CD8-positive, alpha-beta memory T cell (primary cell): ENCODE measurements at regions of chr19 and their contacts with region 1.

Region 1: DNA sequence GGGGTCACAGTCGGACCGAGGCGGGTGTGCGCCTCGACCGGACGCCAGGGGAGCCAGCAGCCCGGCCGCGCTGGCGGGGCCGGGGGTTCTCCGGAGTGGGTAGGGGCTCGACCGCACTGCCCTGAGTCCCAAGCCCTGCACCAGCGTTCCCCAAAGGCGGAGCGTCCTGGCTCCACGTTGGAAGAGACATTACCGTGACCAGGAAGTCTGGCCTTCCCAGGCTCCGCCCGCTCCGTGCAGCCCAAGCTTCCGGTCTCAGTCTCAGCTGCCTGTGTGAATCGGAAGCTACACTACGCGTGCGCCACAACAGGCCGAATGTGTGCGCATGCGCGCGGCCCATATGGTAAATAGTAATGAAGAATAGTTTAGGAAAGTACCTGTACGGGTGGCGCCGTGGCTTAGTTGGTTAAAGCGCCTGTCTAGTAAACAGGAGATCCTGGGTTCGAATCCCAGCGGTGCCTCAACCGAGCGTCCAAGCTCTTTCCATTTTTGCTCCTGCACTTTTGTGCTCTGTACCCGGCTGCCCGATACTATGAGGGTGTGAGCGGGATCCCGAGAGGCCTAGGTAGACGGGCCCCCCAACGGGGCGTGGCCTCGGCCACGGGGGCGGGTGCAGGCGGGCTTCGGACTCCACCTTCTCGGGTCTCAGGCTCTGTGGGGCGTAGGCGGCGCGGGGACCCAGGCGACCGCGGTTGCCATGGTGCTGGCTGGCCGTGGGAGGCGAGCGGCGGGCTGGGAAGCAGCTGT is 17.3 kb upstream of the LRP3 start:
- DNase-seq: peak; percentile 86 to 99 (median 98)
- H3K4me3 ChIP-seq: peak overlapping the region; percentile 97
- H3K4me3 Mint-ChIP-seq: peak overlapping the region; percentile 93 to 98 (median 97)
- H3K27ac ChIP-seq: peak overlapping the region; percentile 97
- H3K27ac Mint-ChIP-seq: peak overlapping the region; percentile 98 to 100 (median 99)
- H3K4me1 ChIP-seq: peaks cover 19% of the 10 kb centered on the region
- H3K4me1 Mint-ChIP-seq: peaks cover 35 to 63% (median 41%) of the 10 kb centered on the region in 3 donors
- H3K27me3 ChIP-seq: no peaks in the 10 kb centered on the region
- H3K27me3 Mint-ChIP-seq: peaks cover 4 to 9% of the 10 kb centered on the region in 2 donors

Region 2: DNA sequence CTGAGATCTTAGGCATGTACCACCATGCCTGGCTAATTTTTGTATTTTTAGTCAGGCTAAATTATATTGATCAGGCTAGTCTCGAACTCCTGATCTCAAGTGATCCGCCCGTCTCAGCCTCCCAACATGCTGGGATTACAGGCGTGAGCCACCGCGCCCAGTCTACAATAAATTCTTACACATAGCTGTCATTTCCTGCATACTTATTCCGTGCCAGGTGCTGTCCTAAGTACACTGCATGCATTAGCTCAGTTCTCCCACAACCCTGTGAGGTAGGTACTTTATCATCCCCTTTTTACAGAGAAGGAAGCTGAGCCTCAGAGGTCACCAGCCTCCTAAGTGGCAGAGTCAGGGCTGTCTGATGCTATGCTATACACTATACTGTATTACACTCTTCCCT is 105.0 kb before region 1 on chr19:
- CTCF ChIA-PET with region 1: no interaction called
- POLR2A ChIA-PET with region 1: no interaction called
- DNase-seq: no peak
- H3K4me3 ChIP-seq: no peak overlapping the region
- H3K4me3 Mint-ChIP-seq: no peak overlapping the region
- H3K27ac ChIP-seq: no peak overlapping the region
- H3K27ac Mint-ChIP-seq: no peak overlapping the region
- H3K4me1 ChIP-seq: no peaks in the 10 kb centered on the region
- H3K4me1 Mint-ChIP-seq: no peaks in the 10 kb centered on the region
- H3K27me3 ChIP-seq: no peaks in the 10 kb centered on the region
- H3K27me3 Mint-ChIP-seq: peaks cover 0 to 3% of the 10 kb centered on the region in 2 donors

Region 3: GRCh38 chr19:33125929-33126388 is 50.9 kb before region 1 on chr19:
- CTCF ChIA-PET with region 1: interaction called, 20 read pairs
- POLR2A ChIA-PET with region 1: no interaction called
- DNase-seq: peak; percentile 26 to 65 (median 37)
- H3K4me3 ChIP-seq: no peak overlapping the region
- H3K4me3 Mint-ChIP-seq: peak overlapping the region in 2 of 7 donors; percentile 29 to 48
- H3K27ac ChIP-seq: peak overlapping the region; percentile 83
- H3K27ac Mint-ChIP-seq: peak overlapping the region in 3 of 8 donors; percentile 21 to 61 (median 29)
- H3K4me1 ChIP-seq: no peaks in the 10 kb centered on the region
- H3K4me1 Mint-ChIP-seq: peaks cover 2 to 18% (median 8%) of the 10 kb centered on the region in 3 donors
- H3K27me3 ChIP-seq: no peaks in the 10 kb centered on the region
- H3K27me3 Mint-ChIP-seq: no peaks in the 10 kb centered on the region

Region 4: GRCh38 chr19:33143897-33144405 is 32.9 kb before region 1 on chr19:
- CTCF ChIA-PET with region 1: interaction called, 27 read pairs
- POLR2A ChIA-PET with region 1: interaction called, 3 read pairs
- DNase-seq: peak; percentile 41 to 72 (median 50)
- H3K4me3 ChIP-seq: no peak overlapping the region
- H3K4me3 Mint-ChIP-seq: peak overlapping the region in 4 of 7 donors; percentile 3 to 52 (median 32)
- H3K27ac ChIP-seq: no peak overlapping the region
- H3K27ac Mint-ChIP-seq: peak overlapping the region in 2 of 8 donors; percentile 16 to 48
- H3K4me1 ChIP-seq: no peaks in the 10 kb centered on the region
- H3K4me1 Mint-ChIP-seq: peaks cover 5 to 6% (median 5%) of the 10 kb centered on the region in 3 donors
- H3K27me3 ChIP-seq: no peaks in the 10 kb centered on the region
- H3K27me3 Mint-ChIP-seq: peaks cover 5 to 16% of the 10 kb centered on the region in 2 donors

Region 5: GRCh38 chr19:33156334-33156733 is 20.5 kb before region 1 on chr19:
- CTCF ChIA-PET with region 1: interaction called, 80 read pairs
- POLR2A ChIA-PET with region 1: interaction called, 62 read pairs
- DNase-seq: no peak
- H3K4me3 ChIP-seq: no peak overlapping the region
- H3K4me3 Mint-ChIP-seq: no peak overlapping the region
- H3K27ac ChIP-seq: no peak overlapping the region
- H3K27ac Mint-ChIP-seq: no peak overlapping the region
- H3K4me1 ChIP-seq: peaks cover 28% of the 10 kb centered on the region
- H3K4me1 Mint-ChIP-seq: peaks cover 25 to 36% (median 32%) of the 10 kb centered on the region in 3 donors
- H3K27me3 ChIP-seq: no peaks in the 10 kb centered on the region
- H3K27me3 Mint-ChIP-seq: peaks cover 0 to 1% of the 10 kb centered on the region in 2 donors

Region 6: DNA sequence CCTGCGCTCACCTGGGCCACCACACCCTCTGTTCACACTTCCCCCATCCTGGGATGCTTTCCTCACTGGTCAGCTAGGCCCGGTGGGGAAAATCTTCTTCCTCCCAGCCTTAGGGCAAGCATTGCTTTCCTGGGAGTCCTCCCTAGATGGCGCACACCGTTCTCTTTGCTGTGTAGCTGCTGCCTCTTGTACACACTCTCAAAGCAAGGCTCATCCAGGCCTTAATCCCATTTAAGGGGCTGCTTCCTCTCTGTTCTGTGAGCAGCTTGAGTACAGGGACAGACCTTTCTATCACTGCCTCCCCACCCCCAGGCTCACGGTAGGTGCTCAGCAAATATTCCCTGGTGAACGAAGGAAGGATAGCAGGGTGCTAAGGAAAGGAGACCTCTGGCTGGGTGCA is 37.8 kb after region 1 on chr19:
- CTCF ChIA-PET with region 1: no interaction called
- POLR2A ChIA-PET with region 1: no interaction called
- DNase-seq: no peak
- H3K4me3 ChIP-seq: no peak overlapping the region
- H3K4me3 Mint-ChIP-seq: no peak overlapping the region
- H3K27ac ChIP-seq: no peak overlapping the region
- H3K27ac Mint-ChIP-seq: peak overlapping the region in 1 of 8 donors; percentile 42
- H3K4me1 ChIP-seq: no peaks in the 10 kb centered on the region
- H3K4me1 Mint-ChIP-seq: no peaks in the 10 kb centered on the region
- H3K27me3 ChIP-seq: no peaks in the 10 kb centered on the region
- H3K27me3 Mint-ChIP-seq: peaks cover 0 to 1% of the 10 kb centered on the region in 2 donors

Region 7: DNA sequence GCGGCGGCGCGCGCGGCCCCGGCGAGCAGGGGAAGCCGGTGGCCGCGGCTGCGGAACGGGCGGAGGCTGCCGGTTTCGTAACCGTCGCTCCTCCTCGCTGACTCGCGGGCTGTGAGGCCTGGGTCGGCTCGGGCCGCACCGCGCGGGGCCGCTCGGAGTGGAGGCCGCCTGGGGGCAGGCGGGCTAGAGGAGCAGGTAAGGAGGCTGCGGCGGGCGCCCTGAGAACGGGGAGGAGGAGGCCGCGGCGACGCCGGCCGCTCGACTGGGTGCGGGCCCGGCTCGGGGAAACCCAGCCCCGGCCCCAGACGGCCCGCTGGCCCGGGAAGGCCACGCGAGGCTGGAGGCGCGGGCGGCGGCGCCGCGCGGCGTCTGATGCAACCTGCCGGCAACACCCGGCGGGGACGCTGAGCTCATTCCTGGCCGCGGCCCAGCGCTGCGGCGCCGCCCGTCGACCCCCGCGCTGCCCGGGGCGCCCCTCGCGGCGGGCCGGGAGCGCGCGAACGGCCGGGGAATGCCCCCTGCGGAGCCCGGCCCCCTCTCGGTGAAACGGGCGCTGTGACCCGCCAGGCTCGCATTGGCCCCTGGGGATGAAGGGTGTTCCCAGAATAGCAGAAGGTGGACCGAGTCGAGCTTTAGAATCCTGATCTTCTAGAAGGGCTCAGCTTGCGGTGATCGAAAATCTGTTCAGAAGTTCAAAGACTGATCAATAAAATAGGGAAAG is 197.0 kb after region 1 on chr19 and contains the start of gene CEBPG:
- CTCF ChIA-PET with region 1: no interaction called
- POLR2A ChIA-PET with region 1: interaction called, 10 read pairs
- DNase-seq: peak in 3 of 5 donors; percentile 48 to 77 (median 62)
- H3K4me3 ChIP-seq: peak within 1 kb of the TSS; percentile 88
- H3K4me3 Mint-ChIP-seq: peak within 1 kb of the TSS; percentile 81 to 94 (median 91)
- H3K27ac ChIP-seq: peak within 1 kb of the TSS; percentile 80
- H3K27ac Mint-ChIP-seq: peak within 1 kb of the TSS; percentile 81 to 96 (median 92)
- H3K4me1 ChIP-seq: peaks cover 17% of the 10 kb centered on the region
- H3K4me1 Mint-ChIP-seq: peaks cover 43 to 50% (median 49%) of the 10 kb centered on the region in 3 donors
- H3K27me3 ChIP-seq: no peaks in the 10 kb centered on the region
- H3K27me3 Mint-ChIP-seq: no peaks in the 10 kb centered on the region
- total RNA-seq, gene CEBPG: 27.8 to 27.9 TPM